ENCODE measurements at regions of chr9 and their contacts with region 1.

Region 1: GRCh38 chr9:5479994-5480694 is 29.8 kb downstream of the CD274 start:
- DNase-seq: no peak
- ATAC-seq: no peak
- H3K4me3 ChIP-seq: no peak overlapping the region
- H3K4me3 Mint-ChIP-seq: no peak overlapping the region
- H3K27ac ChIP-seq: no peak overlapping the region
- H3K27ac Mint-ChIP-seq: no peak overlapping the region
- H3K4me1 ChIP-seq: no peaks in the 10 kb centered on the region
- H3K4me1 Mint-ChIP-seq: no peaks in the 10 kb centered on the region
- H3K27me3 ChIP-seq: no peaks in the 10 kb centered on the region
- H3K27me3 Mint-ChIP-seq: no peaks in the 10 kb centered on the region
- CTCF ChIP-seq: no peak

Region 2: GRCh38 chr9:5470122-5470521 is 10.0 kb before region 1 on chr9:
- CTCF ChIA-PET with region 1: no interaction called
- POLR2A ChIA-PET with region 1: no interaction called
- intact Hi-C with region 1: no loop called
- DNase-seq: no peak
- ATAC-seq: no peak
- H3K4me3 ChIP-seq: no peak overlapping the region
- H3K4me3 Mint-ChIP-seq: no peak overlapping the region
- H3K27ac ChIP-seq: no peak overlapping the region
- H3K27ac Mint-ChIP-seq: no peak overlapping the region
- H3K4me1 ChIP-seq: no peaks in the 10 kb centered on the region
- H3K4me1 Mint-ChIP-seq: no peaks in the 10 kb centered on the region
- H3K27me3 ChIP-seq: no peaks in the 10 kb centered on the region
- H3K27me3 Mint-ChIP-seq: no peaks in the 10 kb centered on the region
- CTCF ChIP-seq: no peak

Region 3: GRCh38 chr9:5524090-5524489 is 43.9 kb after region 1 on chr9:
- CTCF ChIA-PET with region 1: no interaction called
- POLR2A ChIA-PET with region 1: no interaction called
- intact Hi-C with region 1: loop called in 1 of 2 experiments (anchors 5 kb)
- DNase-seq: no peak
- ATAC-seq: no peak
- H3K4me3 ChIP-seq: no peak overlapping the region
- H3K4me3 Mint-ChIP-seq: no peak overlapping the region
- H3K27ac ChIP-seq: no peak overlapping the region
- H3K27ac Mint-ChIP-seq: no peak overlapping the region
- H3K4me1 ChIP-seq: no peaks in the 10 kb centered on the region
- H3K4me1 Mint-ChIP-seq: peaks cover under 1% of the 10 kb centered on the region
- H3K27me3 ChIP-seq: no peaks in the 10 kb centered on the region
- H3K27me3 Mint-ChIP-seq: no peaks in the 10 kb centered on the region
- CTCF ChIP-seq: no peak

Region 4: DNA sequence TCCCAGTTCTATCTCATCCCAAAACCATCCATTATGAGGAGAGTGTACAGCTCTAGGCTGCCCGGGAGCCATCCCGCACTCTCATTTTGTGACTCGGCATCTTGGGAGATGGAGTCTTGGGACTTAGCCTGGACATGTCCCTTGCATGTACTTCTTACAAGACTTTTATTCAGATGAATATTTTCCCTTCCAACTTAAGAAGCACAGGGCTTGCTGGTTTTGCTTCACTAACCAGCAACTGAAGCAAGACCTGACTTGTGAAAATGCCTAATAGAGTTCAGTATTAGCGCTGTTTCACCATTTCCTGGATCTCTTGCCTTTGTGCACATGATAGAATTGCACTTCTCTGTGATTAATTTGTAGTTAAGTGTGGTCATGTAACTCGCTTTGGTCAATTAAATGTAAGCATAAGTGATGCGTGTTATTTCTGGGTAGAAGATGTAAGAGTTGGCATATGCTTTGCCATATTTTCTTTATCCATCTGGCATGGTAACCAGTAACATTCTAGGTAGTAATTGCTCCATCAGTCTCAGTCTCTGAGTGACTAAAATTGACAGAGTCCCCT is 86.0 kb after region 1 on chr9:
- CTCF ChIA-PET with region 1: no interaction called
- POLR2A ChIA-PET with region 1: no interaction called
- intact Hi-C with region 1: no loop called
- DNase-seq: no peak
- ATAC-seq: no peak
- H3K4me3 ChIP-seq: no peak overlapping the region
- H3K4me3 Mint-ChIP-seq: no peak overlapping the region
- H3K27ac ChIP-seq: no peak overlapping the region
- H3K27ac Mint-ChIP-seq: no peak overlapping the region
- H3K4me1 ChIP-seq: peaks cover 22% of the 10 kb centered on the region
- H3K4me1 Mint-ChIP-seq: peaks cover 25% of the 10 kb centered on the region
- H3K27me3 ChIP-seq: no peaks in the 10 kb centered on the region
- H3K27me3 Mint-ChIP-seq: no peaks in the 10 kb centered on the region
- CTCF ChIP-seq: no peak

Measured in CD8-positive, alpha-beta T cell (primary cell).